ENCODE measurements at regions of chr17 and their contacts with region 1.

Region 1: DNA sequence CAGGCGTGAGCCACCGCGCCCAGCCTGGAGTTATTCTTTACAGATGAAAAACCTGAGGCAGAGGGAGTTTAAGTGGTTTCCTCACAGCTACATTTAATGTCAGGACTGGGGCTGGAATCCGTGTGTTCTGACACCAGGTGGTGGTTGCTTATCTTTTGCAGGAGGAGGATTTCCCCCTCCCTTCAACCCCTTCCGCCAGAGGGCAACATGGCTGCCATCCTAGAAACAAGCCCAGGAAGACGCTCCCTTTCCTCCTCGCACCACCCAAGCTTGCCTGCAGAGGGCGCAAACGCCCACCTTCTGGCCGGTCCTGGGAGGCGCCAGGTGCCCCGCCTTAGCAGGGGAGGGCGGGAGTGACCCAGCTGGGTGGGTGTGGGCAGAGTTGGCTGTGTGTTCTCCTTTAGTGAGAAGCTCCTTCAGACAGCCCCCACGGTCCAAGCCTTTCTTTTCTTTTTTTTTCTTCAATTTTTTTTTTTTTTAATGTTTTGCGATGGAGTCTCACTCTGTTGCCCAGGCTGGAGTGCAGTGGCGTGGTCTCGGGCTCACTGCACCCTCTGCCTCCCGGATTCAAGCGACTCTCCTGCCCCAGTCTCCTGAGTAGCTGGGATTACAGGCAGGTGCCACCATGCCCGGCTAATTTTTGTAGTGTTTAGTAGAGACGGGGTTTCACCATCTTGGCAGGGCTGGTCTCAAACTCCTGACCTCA is 9.9 kb upstream of the RAP1GAP2 start:
- DNase-seq: peak; percentile 94 to 95
- ATAC-seq: peak; percentile 89 to 97
- H3K4me3 ChIP-seq: peak overlapping the region; percentile 27
- H3K27ac ChIP-seq: peak overlapping the region; percentile 53; a peak in 4 of 6 replicates
- H3K4me1 ChIP-seq: no peaks in the 10 kb centered on the region
- CTCF ChIP-seq: peak; percentile 92
- EP300 ChIP-seq: no peak
- POLR2A ChIP-seq: no peak
- RAD21 ChIP-seq: peak; percentile 90 to 94

Region 2: DNA sequence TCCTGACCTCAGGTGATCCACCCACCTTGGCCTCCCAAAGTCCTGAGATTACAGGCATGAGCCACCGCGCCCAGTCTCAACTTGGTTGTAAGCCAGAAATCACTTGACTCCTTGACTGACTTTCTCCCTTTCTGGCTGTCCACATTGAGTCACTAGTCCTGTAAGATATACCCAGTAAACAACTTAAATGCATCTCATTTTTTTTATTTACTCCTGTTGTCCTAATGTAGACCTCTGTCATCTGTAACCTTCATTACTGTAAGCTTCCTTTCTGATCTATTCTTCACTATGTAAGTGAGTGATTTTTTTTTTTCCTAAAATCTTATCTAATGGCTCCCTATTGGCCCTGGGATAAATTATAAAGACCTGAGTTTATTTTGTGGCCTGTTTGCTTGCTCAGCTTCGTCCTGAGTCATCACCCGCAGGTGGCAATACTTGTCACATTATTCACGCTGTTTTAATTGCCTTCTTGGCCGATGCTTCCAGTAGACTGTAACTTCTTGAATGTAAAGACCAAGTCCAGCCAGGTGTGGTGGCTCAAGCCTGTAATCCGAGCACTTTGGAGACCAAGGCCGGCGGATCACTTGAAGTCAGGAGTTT is 151.9 kb before region 1 on chr17:
- CTCF ChIA-PET with region 1: no interaction called
- POLR2A ChIA-PET with region 1: no interaction called
- DNase-seq: peak; percentile 56 to 68
- ATAC-seq: peak; percentile 56 to 62; a peak in 5 of 6 replicates
- H3K4me3 ChIP-seq: no peak overlapping the region
- H3K27ac ChIP-seq: peak overlapping the region in 1 of 2 experiments; percentile 31; a peak in 2 of 6 replicates
- H3K4me1 ChIP-seq: peaks cover 45% of the 10 kb centered on the region
- CTCF ChIP-seq: no peak
- EP300 ChIP-seq: no peak
- POLR2A ChIP-seq: no peak
- RAD21 ChIP-seq: no peak

Region 3: GRCh38 chr17:2751491-2751890 is 34.8 kb before region 1 on chr17:
- CTCF ChIA-PET with region 1: interaction called, 16 read pairs
- POLR2A ChIA-PET with region 1: interaction called, 3 read pairs
- DNase-seq: peak in 1 of 2 experiments; percentile 34
- ATAC-seq: peak in 1 of 2 experiments; percentile 8; a peak in 1 of 6 replicates
- H3K4me3 ChIP-seq: no peak overlapping the region
- H3K27ac ChIP-seq: no peak overlapping the region
- H3K4me1 ChIP-seq: peaks cover 16% of the 10 kb centered on the region
- CTCF ChIP-seq: 0 out of 3 replicates have a peak, but pooled peaks have one; percentile 10
- EP300 ChIP-seq: no peak
- POLR2A ChIP-seq: no peak
- RAD21 ChIP-seq: no peak

Region 4: DNA sequence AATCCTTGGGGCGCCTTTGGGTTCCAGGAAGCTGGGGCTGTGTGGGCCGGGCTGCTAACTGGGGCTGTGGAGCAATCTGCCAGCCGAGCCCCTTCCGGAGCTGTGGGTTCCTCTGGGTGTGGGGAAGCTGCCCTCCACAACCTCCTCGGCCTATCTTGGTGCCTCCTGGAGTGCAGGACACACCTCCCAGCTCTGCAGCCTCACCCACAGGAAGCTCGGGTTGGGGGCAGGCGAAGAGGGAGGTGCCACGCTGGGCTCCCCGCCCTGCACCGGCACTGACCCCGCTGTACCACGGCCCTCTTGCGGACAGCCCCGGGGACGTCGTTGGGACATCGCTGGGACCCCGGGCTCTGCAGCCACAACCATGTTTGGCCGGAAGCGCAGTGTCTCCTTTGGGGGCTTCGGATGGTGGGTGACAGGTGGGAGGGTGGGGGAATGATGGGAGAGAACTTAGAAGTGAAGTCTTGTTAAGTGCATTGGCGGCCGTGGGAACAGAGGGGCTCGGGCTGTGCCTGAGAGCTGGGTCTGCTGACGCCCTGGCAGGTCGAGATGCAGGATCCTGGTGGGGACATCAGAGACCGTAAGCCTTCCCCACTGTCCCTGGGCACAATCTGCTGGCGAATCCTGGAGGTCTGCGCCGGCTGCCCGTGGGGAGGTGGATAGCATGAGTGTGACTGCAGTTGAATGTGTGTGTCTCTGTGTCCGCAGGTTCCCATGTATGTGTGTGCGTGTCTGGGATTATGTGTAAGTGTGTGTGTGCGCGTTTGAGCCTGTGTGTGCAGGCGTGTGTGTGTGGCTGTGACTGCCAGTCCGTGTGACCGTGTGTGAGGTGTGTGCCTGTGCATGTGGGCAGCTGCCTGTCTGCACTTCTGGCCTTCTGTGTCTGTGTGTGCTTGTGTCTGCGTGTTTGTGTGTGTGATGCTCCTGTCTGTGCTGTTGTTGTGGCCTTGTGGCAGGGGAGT is 10.1 kb after region 1 on chr17 and contains the start of gene RAP1GAP2:
- CTCF ChIA-PET with region 1: interaction called, 50 read pairs
- POLR2A ChIA-PET with region 1: no interaction called
- DNase-seq: no peak
- ATAC-seq: peak; percentile 20 to 62; a peak in 3 of 6 replicates
- H3K4me3 ChIP-seq: no peak within 1 kb of the TSS
- H3K27ac ChIP-seq: peak within 1 kb of the TSS in 1 of 2 experiments; percentile 37; a peak in 2 of 6 replicates
- H3K4me1 ChIP-seq: 0 out of 3 replicates have a peak, but pooled peaks cover 6% of the 10 kb centered on the region
- CTCF ChIP-seq: no peak
- EP300 ChIP-seq: no peak
- POLR2A ChIP-seq: no peak
- RAD21 ChIP-seq: no peak
- polyA plus RNA-seq, gene RAP1GAP2: 20.8 and 26.0 TPM in 2 replicates

Region 5: GRCh38 chr17:2828397-2829038 is 42.2 kb after region 1 on chr17:
- CTCF ChIA-PET with region 1: interaction called, 18 read pairs
- POLR2A ChIA-PET with region 1: no interaction called
- DNase-seq: peak; percentile 82 to 91
- ATAC-seq: peak; percentile 95 to 97
- H3K4me3 ChIP-seq: no peak overlapping the region
- H3K27ac ChIP-seq: peak overlapping the region; percentile 60 to 70
- H3K4me1 ChIP-seq: peaks cover 7% of the 10 kb centered on the region
- CTCF ChIP-seq: peak; percentile 98
- EP300 ChIP-seq: no peak
- POLR2A ChIP-seq: no peak
- RAD21 ChIP-seq: peak; percentile 99

Measured in A549 (cell line).